Esophagus muscularis mucosa (tissue), 4 donors: ENCODE measurements at regions of chr1 and their contacts with region 1.

Region 1: GRCh38 chr1:227787513-227788270 is 27.8 kb upstream of the PRSS38 start:
- DNase-seq: peak; percentile 97
- H3K4me3 ChIP-seq: peak overlapping the region; percentile 64 to 73 (median 66)
- H3K27ac ChIP-seq: peak overlapping the region; percentile 81 to 86 (median 82)
- H3K4me1 ChIP-seq: peaks cover 16 to 39% (median 29%) of the 10 kb centered on the region in 4 donors
- H3K27me3 ChIP-seq: no peaks in the 10 kb centered on the region
- CTCF ChIP-seq: no peak
- EP300 ChIP-seq: no peak
- POLR2A ChIP-seq: no peak

Region 2: DNA sequence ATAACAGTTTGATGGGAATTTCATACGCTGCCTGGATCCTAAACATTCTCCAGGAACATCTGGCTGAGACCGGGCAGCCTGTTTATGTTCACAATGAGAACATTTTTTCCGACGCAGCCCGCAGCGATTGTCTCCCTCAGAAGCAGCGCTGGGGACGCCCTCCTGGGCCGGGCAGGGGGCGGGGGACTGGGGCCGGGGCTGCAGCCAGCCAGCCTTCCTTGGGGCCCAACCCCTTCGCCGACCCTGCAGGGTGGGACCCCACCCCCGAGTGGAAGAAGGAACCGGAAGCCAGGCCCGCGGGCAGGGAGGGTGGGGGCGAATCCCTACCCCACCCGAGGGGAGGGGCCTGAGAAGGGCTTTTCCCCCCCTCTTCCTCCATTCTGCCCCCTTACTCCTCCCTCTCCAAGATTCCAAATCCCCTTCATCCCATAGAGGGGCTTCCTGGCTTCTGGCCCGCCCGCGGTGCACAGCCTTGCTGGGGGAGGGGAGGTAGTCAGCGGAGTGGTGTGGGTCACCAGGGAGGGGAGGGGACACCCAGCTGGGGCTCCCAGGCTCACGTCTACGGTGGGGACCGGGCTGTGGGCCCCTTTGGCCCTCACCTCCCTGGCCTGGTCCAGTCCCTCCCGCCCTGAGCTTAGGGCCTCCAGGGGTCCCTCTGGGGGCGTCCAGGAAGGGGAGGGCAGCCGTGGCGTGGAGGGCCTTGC is 99.5 kb after region 1 on chr1:
- intact Hi-C with region 1: loop called (anchors 2 kb)
- DNase-seq: peak; percentile 92
- H3K4me3 ChIP-seq: peak overlapping the region; percentile 65 to 76 (median 68)
- H3K27ac ChIP-seq: peak overlapping the region; percentile 94 to 97 (median 96)
- H3K4me1 ChIP-seq: peaks cover 24 to 40% (median 30%) of the 10 kb centered on the region in 4 donors
- H3K27me3 ChIP-seq: peaks cover 0 to 5% (median 0%) of the 10 kb centered on the region in 4 donors
- CTCF ChIP-seq: no peak
- EP300 ChIP-seq: no peak
- POLR2A ChIP-seq: no peak

Region 3: DNA sequence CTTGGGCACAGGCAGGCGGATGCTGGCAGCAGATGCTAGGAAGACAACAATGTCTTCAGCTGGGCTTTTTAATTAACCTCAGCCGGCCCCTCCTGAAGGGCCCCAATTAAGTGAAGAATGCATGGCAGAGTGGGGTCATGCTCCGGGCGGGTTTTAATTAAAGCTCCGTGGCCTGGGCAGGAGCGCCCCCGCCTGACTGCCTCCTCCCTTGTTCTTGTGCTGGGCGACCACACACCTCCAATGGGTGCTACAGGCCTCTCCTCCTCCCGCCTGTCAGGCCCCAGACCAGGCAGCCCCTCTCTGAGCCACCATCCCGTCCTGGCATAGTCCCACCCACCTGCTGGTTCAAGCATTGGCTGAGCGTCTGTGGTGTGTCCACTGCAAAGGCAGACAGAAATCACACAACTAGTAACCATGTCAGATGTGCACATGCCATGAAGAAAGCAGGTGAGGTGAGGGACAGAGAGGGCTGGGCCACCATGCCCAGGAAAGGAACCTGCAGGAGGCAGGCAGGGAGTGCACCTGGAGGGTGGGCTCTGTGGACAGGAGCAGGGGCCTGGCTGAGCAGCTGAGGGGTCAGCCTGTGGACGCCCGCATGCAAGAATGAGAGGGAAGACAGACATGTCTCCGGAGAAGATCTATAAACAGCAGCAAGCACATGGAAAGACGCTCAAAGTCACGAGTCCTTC is 286.3 kb after region 1 on chr1:
- intact Hi-C with region 1: no loop called
- DNase-seq: no peak
- H3K4me3 ChIP-seq: no peak overlapping the region
- H3K27ac ChIP-seq: no peak overlapping the region
- H3K4me1 ChIP-seq: no peaks in the 10 kb centered on the region
- H3K27me3 ChIP-seq: peaks cover 0 to 41% (median 0%) of the 10 kb centered on the region in 4 donors
- CTCF ChIP-seq: no peak
- EP300 ChIP-seq: no peak
- POLR2A ChIP-seq: no peak